MCF 10A (cell line): ENCODE measurements at regions of chr16 and their contacts with region 1.

Region 1: DNA sequence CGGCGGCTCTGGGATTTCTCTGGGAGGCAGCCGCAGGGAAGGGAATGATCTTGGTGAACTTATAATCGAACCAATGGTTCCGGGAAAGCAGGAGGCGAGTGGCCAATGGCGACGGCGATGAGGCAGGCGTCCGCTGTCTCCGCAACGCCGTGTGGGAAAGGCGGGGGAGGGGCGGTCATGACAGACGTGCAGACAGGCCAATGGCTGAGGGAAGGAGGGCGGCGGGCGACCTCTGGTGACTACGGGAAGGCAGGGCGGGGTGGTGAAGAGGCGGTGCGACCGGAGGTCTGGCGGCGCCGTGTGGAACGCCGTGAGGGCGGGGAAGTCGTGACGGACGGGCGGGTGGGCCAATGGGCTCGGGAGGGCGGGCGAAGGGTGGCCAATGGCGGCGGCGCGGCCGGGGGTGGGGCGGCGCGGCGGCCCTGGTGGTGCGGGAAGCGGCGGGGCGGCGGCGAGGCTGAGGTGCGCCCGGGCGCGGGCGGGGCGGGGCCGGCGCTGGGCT is at the start of gene RAB40C:
- DNase-seq: peak; percentile 96
- H3K4me3 Mint-ChIP-seq: peak within 1 kb of the TSS; percentile 91
- H3K27ac Mint-ChIP-seq: peak within 1 kb of the TSS; percentile 96
- H3K4me1 Mint-ChIP-seq: peaks cover 41% of the 10 kb centered on the region
- H3K27me3 Mint-ChIP-seq: no peaks in the 10 kb centered on the region
- CTCF ChIP-seq: no peak
- total RNA-seq, gene RAB40C: 17.1 and 17.7 TPM in 2 replicates

Region 2: GRCh38 chr16:391885-392335 is 197.8 kb before region 1 on chr16:
- CTCF ChIA-PET with region 1: no interaction called
- POLR2A ChIA-PET with region 1: no interaction called
- intact Hi-C with region 1: loop called (anchors 5 kb)
- DNase-seq: peak; percentile 70
- H3K4me3 Mint-ChIP-seq: no peak overlapping the region
- H3K27ac Mint-ChIP-seq: no peak overlapping the region
- H3K4me1 Mint-ChIP-seq: no peaks in the 10 kb centered on the region
- H3K27me3 Mint-ChIP-seq: no peaks in the 10 kb centered on the region
- CTCF ChIP-seq: peak; percentile 88

Region 3: GRCh38 chr16:527006-527753 is 62.5 kb before region 1 on chr16 and contains the start of gene CAPN15:
- CTCF ChIA-PET with region 1: interaction called, 4 read pairs
- POLR2A ChIA-PET with region 1: interaction called, 23 read pairs
- intact Hi-C with region 1: no loop called
- DNase-seq: peak; percentile 79
- H3K4me3 Mint-ChIP-seq: peak within 1 kb of the TSS; percentile 90
- H3K27ac Mint-ChIP-seq: peak within 1 kb of the TSS; percentile 88
- H3K4me1 Mint-ChIP-seq: peaks cover 8% of the 10 kb centered on the region
- H3K27me3 Mint-ChIP-seq: no peaks in the 10 kb centered on the region
- CTCF ChIP-seq: no peak
- total RNA-seq, gene CAPN15: 68.2 and 81.1 TPM in 2 replicates

Region 4: GRCh38 chr16:621528-622105 is 31.9 kb after region 1 on chr16:
- CTCF ChIA-PET with region 1: interaction called, 18 read pairs
- POLR2A ChIA-PET with region 1: interaction called, 88 read pairs
- intact Hi-C with region 1: loop called (anchors 1 kb)
- DNase-seq: peak; percentile 42
- H3K4me3 Mint-ChIP-seq: peak overlapping the region; percentile 64
- H3K27ac Mint-ChIP-seq: peak overlapping the region; percentile 85
- H3K4me1 Mint-ChIP-seq: peaks cover 11% of the 10 kb centered on the region
- H3K27me3 Mint-ChIP-seq: no peaks in the 10 kb centered on the region
- CTCF ChIP-seq: no peak

Region 5: DNA sequence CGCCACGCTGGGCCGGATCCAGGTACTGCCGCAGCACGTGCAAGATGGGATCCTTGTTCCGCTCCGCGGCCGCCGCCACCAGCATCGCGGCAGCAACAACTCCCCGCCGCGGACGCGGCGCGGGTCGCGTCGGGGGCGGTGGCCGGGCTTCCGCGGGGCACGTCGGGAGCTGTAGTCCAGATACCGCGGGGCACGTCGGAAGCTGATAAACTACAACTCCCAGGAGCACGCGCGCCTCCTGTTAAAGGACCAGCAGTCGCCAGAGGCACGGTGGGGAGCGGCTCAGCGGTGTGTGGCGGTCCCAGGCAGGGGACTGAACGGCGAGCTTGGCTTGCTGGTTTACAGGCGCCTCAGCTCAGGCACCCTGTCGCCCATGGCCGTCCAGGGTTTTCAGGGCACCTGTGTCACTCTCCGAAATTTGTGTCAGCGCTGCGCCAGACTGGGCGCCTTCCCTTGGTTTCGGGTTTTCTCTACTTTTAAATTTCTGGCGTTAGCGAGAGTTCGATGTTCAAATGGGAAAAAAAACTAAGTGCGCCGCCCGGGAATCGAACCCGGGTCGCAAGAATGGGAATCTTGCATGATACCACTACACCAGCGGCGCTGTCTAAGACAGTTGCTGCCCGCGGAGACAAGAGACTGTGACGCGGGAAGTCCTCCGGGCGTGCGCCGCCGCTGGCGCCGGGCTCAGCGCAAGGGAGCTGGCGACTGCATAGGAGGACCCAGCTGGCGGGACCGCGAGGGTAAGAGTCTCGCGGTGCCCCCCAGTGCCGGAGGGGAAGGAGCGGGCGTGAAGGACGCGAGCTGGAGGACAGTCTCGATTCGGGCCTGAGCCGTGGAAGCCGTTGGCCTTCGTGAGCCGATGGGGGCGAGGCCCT is 46.7 kb after region 1 on chr16 and contains the start of gene METTL26:
- CTCF ChIA-PET with region 1: interaction called, 5 read pairs
- POLR2A ChIA-PET with region 1: interaction called, 40 read pairs
- intact Hi-C with region 1: loop called (anchors 2 kb)
- DNase-seq: peak; percentile 95
- H3K4me3 Mint-ChIP-seq: peak within 1 kb of the TSS; percentile 91
- H3K27ac Mint-ChIP-seq: peak within 1 kb of the TSS; percentile 94
- H3K4me1 Mint-ChIP-seq: peaks cover 5% of the 10 kb centered on the region
- H3K27me3 Mint-ChIP-seq: no peaks in the 10 kb centered on the region
- CTCF ChIP-seq: no peak
- total RNA-seq, gene METTL26: 104 and 106 TPM in 2 replicates

Region 6: DNA sequence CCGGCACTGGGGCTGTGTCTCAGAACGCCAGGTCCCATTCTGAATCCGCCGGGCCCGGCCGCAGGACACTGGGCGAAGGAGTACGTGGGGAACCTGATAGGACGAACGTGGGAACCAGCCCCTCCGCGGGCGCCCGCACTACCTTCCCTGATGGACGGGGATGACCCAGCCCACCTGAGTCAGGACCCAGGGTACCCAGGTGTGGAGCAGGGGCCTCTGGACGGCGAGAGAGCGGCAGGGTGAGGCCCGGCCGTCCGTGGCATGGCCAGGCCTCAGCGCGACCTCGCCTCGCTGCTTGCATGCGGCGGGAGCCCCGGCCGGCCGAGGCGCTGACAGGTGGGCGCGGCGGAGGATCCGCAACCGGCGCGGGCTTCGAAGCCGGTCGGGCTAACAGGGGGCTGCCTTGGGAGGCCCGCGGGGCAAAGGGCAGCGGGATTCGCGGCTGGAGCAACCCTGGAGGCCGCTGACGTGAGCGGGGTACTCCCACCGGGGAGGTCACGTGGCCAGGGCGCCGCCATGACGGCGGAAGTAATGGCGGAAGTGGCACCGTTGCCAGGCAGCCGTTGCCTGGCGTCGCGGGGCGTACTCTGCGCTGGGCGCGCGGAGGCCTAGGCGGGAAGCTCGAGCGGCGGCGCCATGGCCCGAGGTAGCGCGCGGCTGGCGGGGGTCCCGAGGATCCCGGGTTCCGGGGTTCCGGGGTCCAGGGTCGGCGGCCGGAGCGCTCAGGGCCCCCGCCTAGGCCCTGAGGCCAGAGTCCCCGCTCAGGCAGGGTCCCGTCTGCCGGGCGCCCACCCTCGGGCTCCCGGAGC is 59.3 kb after region 1 on chr16 and contains the start of gene WDR90:
- CTCF ChIA-PET with region 1: interaction called, 7 read pairs
- POLR2A ChIA-PET with region 1: interaction called, 11 read pairs
- intact Hi-C with region 1: loop called (anchors 2 kb)
- DNase-seq: peak; percentile 91
- H3K4me3 Mint-ChIP-seq: peak within 1 kb of the TSS; percentile 74
- H3K27ac Mint-ChIP-seq: peak within 1 kb of the TSS; percentile 88
- H3K4me1 Mint-ChIP-seq: peaks cover 14% of the 10 kb centered on the region
- H3K27me3 Mint-ChIP-seq: no peaks in the 10 kb centered on the region
- CTCF ChIP-seq: no peak
- total RNA-seq, gene WDR90: 40.4 and 47.9 TPM in 2 replicates

Region 7: DNA sequence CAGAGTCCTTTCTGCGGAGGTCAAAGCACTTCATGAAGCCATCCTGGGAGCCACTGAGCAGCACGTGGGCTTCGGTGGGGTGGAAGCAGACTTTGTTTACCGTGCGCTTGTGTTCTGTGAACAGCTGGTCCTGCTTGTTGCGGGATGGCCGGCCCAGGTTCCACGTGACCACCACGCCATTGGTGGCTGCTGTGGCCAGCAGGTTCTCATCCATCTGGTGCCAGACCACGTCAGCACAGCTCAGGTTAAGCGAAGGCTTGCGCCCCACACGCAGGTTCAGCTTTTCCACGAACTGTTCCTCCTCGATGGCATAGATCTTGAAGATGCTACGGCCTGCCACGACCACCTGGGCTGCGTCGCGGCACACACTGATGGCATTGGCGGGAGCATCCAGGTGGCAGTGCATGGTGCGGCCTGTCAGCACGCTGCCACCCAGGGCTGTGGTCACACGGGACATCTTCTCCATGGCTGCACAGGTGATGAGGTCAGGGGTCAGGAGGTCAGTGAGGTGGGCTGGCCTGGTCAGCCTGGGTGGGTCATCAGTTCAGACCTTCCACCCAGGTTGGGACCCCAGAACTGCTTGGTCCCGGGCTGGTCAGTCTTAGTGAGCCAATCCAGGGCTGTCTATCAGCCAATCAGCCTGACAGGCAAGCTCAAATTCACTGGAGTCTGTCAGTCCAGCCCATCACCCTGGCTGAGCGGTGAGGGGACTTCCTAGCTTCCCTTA is 99.6 kb after region 1 on chr16:
- CTCF ChIA-PET with region 1: no interaction called
- POLR2A ChIA-PET with region 1: interaction called, 11 read pairs
- intact Hi-C with region 1: no loop called
- DNase-seq: no peak
- H3K4me3 Mint-ChIP-seq: peak overlapping the region; percentile 87
- H3K27ac Mint-ChIP-seq: peak overlapping the region; percentile 86
- H3K4me1 Mint-ChIP-seq: peaks cover 10% of the 10 kb centered on the region
- H3K27me3 Mint-ChIP-seq: no peaks in the 10 kb centered on the region
- CTCF ChIP-seq: no peak